CD4-positive, alpha-beta T cell (primary cell): ENCODE measurements at regions of chr5 and their contacts with region 1.

Region 1: DNA sequence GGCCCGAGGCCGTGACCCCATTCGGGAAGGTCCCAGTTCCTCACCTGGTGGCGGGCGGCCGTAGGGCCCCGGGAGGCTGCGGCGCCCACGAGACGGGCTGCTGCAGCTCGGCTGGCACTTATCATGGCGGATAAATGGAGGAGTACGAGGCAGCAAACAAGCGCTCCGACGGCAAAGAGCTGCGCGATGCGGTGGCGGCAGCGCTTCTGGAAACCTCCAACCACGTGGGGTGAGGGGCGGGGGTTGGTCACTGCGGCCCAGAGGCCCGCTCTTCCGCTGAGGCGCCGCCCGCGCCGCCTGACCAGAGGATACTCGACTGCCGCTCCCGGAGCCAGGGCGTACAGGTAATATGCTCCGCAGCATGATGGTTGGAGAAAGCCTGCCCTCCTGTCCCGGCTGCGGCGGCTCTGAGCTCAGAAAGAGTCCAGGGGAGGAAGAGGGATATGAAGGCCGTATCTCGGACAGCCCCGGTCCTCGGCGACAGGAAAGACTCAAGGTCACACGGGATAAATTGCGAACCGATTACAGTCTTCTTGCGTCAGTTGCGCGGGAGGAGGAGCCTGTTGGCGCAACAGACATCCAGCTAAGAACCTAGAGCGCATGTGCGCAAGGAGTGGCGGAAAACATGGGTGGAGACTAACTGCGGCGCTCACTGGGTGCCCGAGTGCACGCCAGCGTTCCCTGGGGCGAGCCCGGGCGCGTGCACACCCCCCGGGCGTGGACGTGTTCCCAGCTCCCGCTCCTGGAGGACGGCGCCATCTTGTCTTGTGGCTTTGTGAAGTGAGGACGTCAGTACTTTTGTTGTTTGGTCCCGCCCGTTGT is at the start of gene HSPA9:
- DNase-seq: peak; percentile 93 to 100 (median 96)
- ATAC-seq: peak; percentile 80
- H3K4me3 ChIP-seq: peak within 1 kb of the TSS; percentile 79
- H3K4me3 Mint-ChIP-seq: peak within 1 kb of the TSS; percentile 97
- H3K27ac ChIP-seq: peak within 1 kb of the TSS; percentile 98 to 99
- H3K27ac Mint-ChIP-seq: peak within 1 kb of the TSS; percentile 100
- H3K4me1 ChIP-seq: peaks cover 26% of the 10 kb centered on the region
- H3K4me1 Mint-ChIP-seq: peaks cover 50% of the 10 kb centered on the region
- H3K27me3 ChIP-seq: no peaks in the 10 kb centered on the region
- H3K27me3 Mint-ChIP-seq: no peaks in the 10 kb centered on the region
- CTCF ChIP-seq: no peak
- total RNA-seq, gene HSPA9: 354 to 366 TPM

Region 2: GRCh38 chr5:138035605-138036537 is 539.5 kb before region 1 on chr5:
- CTCF ChIA-PET with region 1: no interaction called
- POLR2A ChIA-PET with region 1: interaction called, 3 read pairs
- intact Hi-C with region 1: loop called in 1 of 2 experiments (anchors 10 kb)
- DNase-seq: peak; percentile 27 to 89 (median 44)
- ATAC-seq: peak; percentile 60
- H3K4me3 ChIP-seq: no peak overlapping the region
- H3K4me3 Mint-ChIP-seq: peak overlapping the region; percentile 87
- H3K27ac ChIP-seq: no peak overlapping the region
- H3K27ac Mint-ChIP-seq: peak overlapping the region; percentile 38
- H3K4me1 ChIP-seq: peaks cover 27% of the 10 kb centered on the region
- H3K4me1 Mint-ChIP-seq: peaks cover 35% of the 10 kb centered on the region
- H3K27me3 ChIP-seq: no peaks in the 10 kb centered on the region
- H3K27me3 Mint-ChIP-seq: no peaks in the 10 kb centered on the region
- CTCF ChIP-seq: peak; percentile 97

Region 3: GRCh38 chr5:138337685-138338410 is 237.6 kb before region 1 on chr5 and contains the start of gene FAM53C:
- CTCF ChIA-PET with region 1: no interaction called
- POLR2A ChIA-PET with region 1: interaction called, 12 read pairs
- intact Hi-C with region 1: loop called in 1 of 2 experiments (anchors 10 kb)
- DNase-seq: peak; percentile 82 to 96 (median 92)
- ATAC-seq: peak; percentile 81
- H3K4me3 ChIP-seq: peak within 1 kb of the TSS; percentile 62
- H3K4me3 Mint-ChIP-seq: peak within 1 kb of the TSS; percentile 94
- H3K27ac ChIP-seq: peak within 1 kb of the TSS; percentile 93 to 95
- H3K27ac Mint-ChIP-seq: peak within 1 kb of the TSS; percentile 96
- H3K4me1 ChIP-seq: peaks cover 21% of the 10 kb centered on the region
- H3K4me1 Mint-ChIP-seq: peaks cover 46% of the 10 kb centered on the region
- H3K27me3 ChIP-seq: no peaks in the 10 kb centered on the region
- H3K27me3 Mint-ChIP-seq: no peaks in the 10 kb centered on the region
- CTCF ChIP-seq: no peak
- total RNA-seq, gene FAM53C: 81.0 to 83.8 TPM

Region 4: DNA sequence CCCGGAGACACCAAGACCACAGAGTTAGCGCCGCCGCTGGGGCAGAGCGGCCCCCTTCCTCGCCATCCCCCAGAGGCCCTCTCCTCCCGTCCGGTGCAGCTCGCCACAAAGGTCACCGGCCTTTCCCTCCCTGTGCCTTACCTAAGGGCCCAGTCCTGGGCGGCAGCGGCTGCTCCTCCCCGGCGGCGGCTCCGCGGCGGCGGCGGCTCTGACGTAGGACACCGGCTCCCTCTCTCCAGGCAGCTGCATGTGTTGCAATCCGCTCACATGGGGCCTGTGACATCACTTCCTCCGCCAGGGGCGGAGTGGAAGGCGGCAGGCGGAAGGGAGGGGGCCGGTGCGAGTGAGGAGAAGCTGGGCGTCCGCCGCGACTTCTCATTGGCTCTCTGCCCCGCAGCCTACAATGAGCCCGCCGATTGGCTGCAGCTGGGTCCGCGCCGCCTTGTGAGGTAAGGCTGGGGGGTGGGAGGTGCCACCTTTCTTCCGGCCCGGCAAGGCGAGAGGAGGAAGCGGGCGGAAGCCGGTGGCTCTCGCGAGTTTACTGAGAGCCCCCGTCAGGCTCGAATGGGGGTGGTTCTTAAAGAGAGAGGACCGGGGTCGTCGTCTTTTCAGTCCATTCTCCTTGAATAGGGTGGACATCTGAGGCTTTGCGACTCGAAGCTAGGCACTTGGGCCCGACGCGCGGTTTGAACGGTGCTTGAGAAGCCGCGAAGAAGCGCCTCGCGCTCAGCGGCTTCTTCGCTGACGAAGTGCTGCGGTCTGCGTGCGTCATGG is 32.3 kb before region 1 on chr5 and contains the start of gene ETF1:
- CTCF ChIA-PET with region 1: interaction called, 11 read pairs
- POLR2A ChIA-PET with region 1: interaction called, 152 read pairs
- intact Hi-C with region 1: loop called (anchors 1 kb)
- DNase-seq: peak; percentile 98 to 100 (median 99)
- ATAC-seq: peak; percentile 87
- H3K4me3 ChIP-seq: peak within 1 kb of the TSS; percentile 95
- H3K4me3 Mint-ChIP-seq: peak within 1 kb of the TSS; percentile 99
- H3K27ac ChIP-seq: peak within 1 kb of the TSS; percentile 99 to 100
- H3K27ac Mint-ChIP-seq: peak within 1 kb of the TSS; percentile 99
- H3K4me1 ChIP-seq: peaks cover 57% of the 10 kb centered on the region
- H3K4me1 Mint-ChIP-seq: peaks cover 88% of the 10 kb centered on the region
- H3K27me3 ChIP-seq: no peaks in the 10 kb centered on the region
- H3K27me3 Mint-ChIP-seq: no peaks in the 10 kb centered on the region
- CTCF ChIP-seq: no peak
- total RNA-seq, gene ETF1: 178 to 187 TPM

Region 5: GRCh38 chr5:139293504-139294373 is 718.3 kb after region 1 on chr5 and contains the start of gene MATR3:
- CTCF ChIA-PET with region 1: no interaction called
- POLR2A ChIA-PET with region 1: interaction called, 22 read pairs
- intact Hi-C with region 1: no loop called
- DNase-seq: peak; percentile 88 to 96 (median 92)
- ATAC-seq: peak; percentile 89
- H3K4me3 ChIP-seq: peak within 1 kb of the TSS; percentile 95
- H3K4me3 Mint-ChIP-seq: peak within 1 kb of the TSS; percentile 99
- H3K27ac ChIP-seq: peak within 1 kb of the TSS; percentile 98 to 100
- H3K27ac Mint-ChIP-seq: peak within 1 kb of the TSS; percentile 99
- H3K4me1 ChIP-seq: peaks cover 27% of the 10 kb centered on the region
- H3K4me1 Mint-ChIP-seq: peaks cover 52% of the 10 kb centered on the region
- H3K27me3 ChIP-seq: no peaks in the 10 kb centered on the region
- H3K27me3 Mint-ChIP-seq: no peaks in the 10 kb centered on the region
- CTCF ChIP-seq: no peak
- total RNA-seq, gene MATR3: 376 to 401 TPM

Region 6: DNA sequence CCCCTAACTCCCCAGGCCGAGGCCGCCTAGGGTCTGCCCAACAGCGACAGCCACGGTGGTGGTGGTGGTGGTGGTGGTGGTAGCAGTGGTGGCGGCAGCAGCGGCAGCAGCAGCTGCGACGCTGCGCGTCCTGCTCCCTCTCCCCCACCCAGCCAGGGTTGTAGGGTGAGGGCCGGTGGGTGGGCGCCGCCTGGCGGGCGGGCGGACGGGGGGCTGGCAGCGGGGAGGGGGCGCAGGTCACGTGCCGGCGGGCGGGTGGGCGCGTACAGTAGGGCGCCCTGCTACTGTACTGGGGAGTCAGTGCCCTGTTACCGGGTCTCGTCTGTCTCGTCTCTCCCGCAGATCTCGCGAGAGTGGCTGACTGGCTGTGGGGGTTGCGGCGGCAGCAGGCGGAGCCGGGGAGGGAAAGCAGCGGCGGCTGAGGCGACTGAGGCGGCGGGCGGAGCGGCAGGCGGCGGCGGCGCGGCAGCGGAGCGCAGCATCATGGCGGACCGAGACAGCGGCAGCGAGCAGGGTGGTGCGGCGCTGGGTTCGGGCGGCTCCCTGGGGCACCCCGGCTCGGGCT is 1538.4 kb after region 1 on chr5 and contains the start of gene PURA:
- CTCF ChIA-PET with region 1: no interaction called
- POLR2A ChIA-PET with region 1: interaction called, 5 read pairs
- intact Hi-C with region 1: loop called in 1 of 2 experiments (anchors 10 kb)
- DNase-seq: peak; percentile 95 to 98 (median 97)
- ATAC-seq: peak; percentile 93
- H3K4me3 ChIP-seq: peak within 1 kb of the TSS; percentile 84
- H3K4me3 Mint-ChIP-seq: peak within 1 kb of the TSS; percentile 100
- H3K27ac ChIP-seq: peak within 1 kb of the TSS; percentile 82 to 83
- H3K27ac Mint-ChIP-seq: peak within 1 kb of the TSS; percentile 96
- H3K4me1 ChIP-seq: peaks cover 40% of the 10 kb centered on the region
- H3K4me1 Mint-ChIP-seq: peaks cover 90% of the 10 kb centered on the region
- H3K27me3 ChIP-seq: peaks cover 8 to 10% of the 10 kb centered on the region in 2 experiments
- H3K27me3 Mint-ChIP-seq: peaks cover 6% of the 10 kb centered on the region
- CTCF ChIP-seq: no peak
- total RNA-seq, gene PURA: 7.0 to 7.9 TPM

Region 7: GRCh38 chr5:140401362-140402257 is 1826.2 kb after region 1 on chr5 and contains the start of gene ANKHD1:
- CTCF ChIA-PET with region 1: no interaction called
- POLR2A ChIA-PET with region 1: interaction called, 4 read pairs
- intact Hi-C with region 1: loop called in 1 of 2 experiments (anchors 10 kb)
- DNase-seq: peak; percentile 90 to 100 (median 94)
- ATAC-seq: peak; percentile 78
- H3K4me3 ChIP-seq: peak within 1 kb of the TSS; percentile 97
- H3K4me3 Mint-ChIP-seq: no peak within 1 kb of the TSS
- H3K27ac ChIP-seq: peak within 1 kb of the TSS; percentile 91 to 96
- H3K27ac Mint-ChIP-seq: no peak within 1 kb of the TSS
- H3K4me1 ChIP-seq: peaks cover 36% of the 10 kb centered on the region
- H3K4me1 Mint-ChIP-seq: peaks cover 41% of the 10 kb centered on the region
- H3K27me3 ChIP-seq: no peaks in the 10 kb centered on the region
- H3K27me3 Mint-ChIP-seq: no peaks in the 10 kb centered on the region
- CTCF ChIP-seq: no peak
- total RNA-seq, gene ANKHD1: 202 to 212 TPM